Right lobe of liver (tissue), 6 donors: ENCODE measurements at regions of chr2 and their contacts with region 1.

Region 1: DNA sequence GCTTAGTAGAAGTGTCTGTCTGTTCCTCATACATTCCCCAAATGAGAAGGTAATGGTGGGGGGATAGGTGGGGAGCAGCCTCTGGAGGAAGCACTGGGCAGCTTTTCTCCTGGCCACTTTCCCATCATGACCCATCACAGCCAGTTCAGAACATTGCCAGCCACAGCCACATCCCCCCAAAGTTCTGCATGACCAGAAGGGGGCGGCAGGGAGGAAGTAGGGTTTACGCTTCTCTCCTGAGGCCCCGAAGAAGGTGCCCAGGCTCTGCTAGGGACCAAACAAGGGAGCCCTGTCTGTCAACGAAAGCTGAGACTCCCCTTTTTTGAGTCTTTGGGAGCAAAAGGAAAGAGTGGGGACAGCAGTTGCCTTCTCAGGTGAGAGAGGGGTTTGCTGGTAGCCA is 7.7 kb downstream of the IGFBP5 start:
- DNase-seq: peak in 1 of 3 donors; percentile 29
- ATAC-seq: no peak
- H3K4me3 ChIP-seq: no peak overlapping the region
- H3K27ac ChIP-seq: no peak overlapping the region
- H3K4me1 ChIP-seq: peaks cover 0 to 3% (median 0%) of the 10 kb centered on the region in 4 donors
- H3K27me3 ChIP-seq: no peaks in the 10 kb centered on the region
- CTCF ChIP-seq: peak in 3 of 4 donors; percentile 16 to 22 (median 21)
- POLR2A ChIP-seq: no peak

Region 2: DNA sequence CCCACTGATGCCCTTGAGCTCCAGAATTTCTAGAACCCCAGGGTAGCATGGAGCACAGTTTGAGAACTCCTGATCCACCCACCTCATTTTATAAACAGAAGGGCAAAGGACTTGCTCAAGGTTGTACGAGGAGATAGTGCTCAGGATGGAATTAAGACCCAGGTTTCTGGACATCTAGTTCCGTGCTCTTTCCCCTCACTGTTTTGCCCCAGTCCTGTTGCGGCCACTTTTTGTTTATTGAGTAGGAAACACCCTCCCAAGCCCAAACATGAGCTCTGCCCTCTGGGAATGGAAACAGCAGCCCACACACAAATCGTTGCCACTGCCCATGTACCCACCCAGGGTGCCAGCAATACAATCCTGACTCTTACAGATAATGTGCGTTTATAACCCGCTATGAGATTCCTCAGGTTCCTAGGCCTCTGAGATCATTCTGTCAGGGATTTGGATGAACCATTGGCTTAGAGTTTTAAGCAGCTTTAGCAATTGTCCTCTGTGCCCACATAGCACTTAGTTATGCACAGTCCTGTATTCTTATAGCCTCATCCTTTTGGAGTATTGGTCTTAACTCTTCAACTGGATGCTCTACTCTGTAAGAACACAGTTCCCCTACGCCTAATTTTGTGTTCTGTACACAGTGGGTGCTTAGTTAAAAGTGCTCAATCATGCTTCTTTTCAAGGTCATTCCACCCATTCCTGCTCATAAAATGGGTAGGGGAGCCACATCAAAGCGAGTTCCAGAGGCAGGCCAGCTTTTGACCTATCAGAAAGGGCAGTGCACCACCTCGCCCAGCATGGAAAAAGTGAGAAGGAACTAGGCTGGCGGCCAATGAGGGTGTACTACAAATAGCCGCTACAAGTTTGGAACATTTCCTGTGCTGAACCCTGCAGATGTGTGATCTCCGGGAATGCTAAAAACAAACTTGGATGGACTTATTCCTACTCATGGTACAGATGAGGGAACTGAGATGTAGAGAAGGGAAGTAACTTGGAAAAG is 114.8 kb before region 1 on chr2:
- intact Hi-C with region 1: no loop called
- DNase-seq: peak; percentile 87 to 96 (median 93)
- ATAC-seq: peak; percentile 72 to 85 (median 80)
- H3K4me3 ChIP-seq: peak overlapping the region in 1 of 3 donors; percentile 0
- H3K27ac ChIP-seq: peak overlapping the region; percentile 70 to 95 (median 89)
- H3K4me1 ChIP-seq: peaks cover 0 to 51% (median 14%) of the 10 kb centered on the region in 4 donors
- H3K27me3 ChIP-seq: no peaks in the 10 kb centered on the region
- CTCF ChIP-seq: no peak
- POLR2A ChIP-seq: peak; percentile 51

Region 3: DNA sequence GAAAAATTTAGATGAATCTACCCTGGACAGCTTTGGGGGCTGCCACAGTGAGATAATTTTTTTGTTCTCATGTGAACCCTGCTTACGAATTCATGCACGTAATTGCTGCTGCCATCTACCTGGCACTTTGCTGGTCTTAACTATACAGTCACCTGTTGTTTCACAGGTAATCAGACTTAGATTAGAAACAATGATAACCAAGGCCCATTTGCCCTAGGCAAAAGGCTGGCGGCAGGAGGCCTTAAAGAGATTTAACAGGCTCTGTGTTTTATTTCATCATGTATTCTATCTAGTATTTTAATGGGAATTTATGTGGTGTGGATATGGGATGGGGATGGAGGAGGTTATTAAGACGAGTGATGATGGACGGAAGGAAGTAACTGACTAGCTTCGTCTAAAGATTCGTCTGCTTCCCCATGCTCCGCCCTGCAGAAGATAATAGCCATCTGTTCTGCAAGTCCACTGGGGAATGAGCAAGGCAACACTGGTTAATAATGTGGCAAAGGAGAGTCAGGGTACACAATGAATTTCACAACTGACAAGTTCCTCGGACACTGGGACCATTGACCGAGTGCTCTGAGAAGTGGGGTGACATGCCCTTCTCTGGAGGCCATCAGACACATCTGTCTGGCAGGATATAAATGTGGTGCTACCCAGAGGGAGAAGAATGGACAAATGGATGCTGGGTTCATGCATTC is 464.0 kb after region 1 on chr2:
- intact Hi-C with region 1: loop called in 1 of 2 experiments (anchors 10 kb)
- DNase-seq: no peak
- ATAC-seq: no peak
- H3K4me3 ChIP-seq: no peak overlapping the region
- H3K27ac ChIP-seq: no peak overlapping the region
- H3K4me1 ChIP-seq: no peaks in the 10 kb centered on the region
- H3K27me3 ChIP-seq: no peaks in the 10 kb centered on the region
- CTCF ChIP-seq: no peak
- POLR2A ChIP-seq: no peak

Region 4: DNA sequence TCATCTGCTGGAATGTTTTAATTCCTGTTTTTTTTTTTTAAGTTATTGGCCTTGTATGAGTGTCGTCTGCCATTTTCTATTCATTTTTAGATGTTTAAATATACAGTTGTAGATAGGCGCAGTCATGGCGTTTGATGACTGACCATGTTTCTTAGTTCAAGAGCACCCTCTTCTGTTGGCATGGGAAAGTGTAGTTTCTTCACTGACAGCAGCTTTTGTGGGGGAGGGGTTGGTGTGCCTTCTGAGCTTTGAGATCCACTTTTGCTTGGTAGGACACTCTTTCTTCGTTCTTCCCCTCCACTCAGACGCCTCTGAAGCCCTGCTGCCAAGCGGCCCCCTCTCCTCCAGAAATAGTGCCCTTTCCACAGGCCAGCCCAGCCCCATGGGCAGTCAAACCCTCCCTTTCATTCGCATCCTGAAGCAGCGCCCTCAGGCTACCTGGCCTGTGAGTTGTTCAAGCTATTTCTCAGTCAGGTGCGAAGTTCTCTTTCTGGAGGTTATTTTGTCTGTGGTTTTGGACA is 823.2 kb after region 1 on chr2:
- intact Hi-C with region 1: loop called in 1 of 2 experiments (anchors 10 kb)
- DNase-seq: peak in 2 of 3 donors; percentile 23 to 54
- ATAC-seq: peak; percentile 86 to 99 (median 90)
- H3K4me3 ChIP-seq: no peak overlapping the region
- H3K27ac ChIP-seq: no peak overlapping the region
- H3K4me1 ChIP-seq: no peaks in the 10 kb centered on the region
- H3K27me3 ChIP-seq: no peaks in the 10 kb centered on the region
- CTCF ChIP-seq: peak; percentile 52 to 69 (median 62)
- POLR2A ChIP-seq: no peak